GM12878 (cell line): ENCODE measurements at regions of chr20 and their contacts with region 1.

Region 1: DNA sequence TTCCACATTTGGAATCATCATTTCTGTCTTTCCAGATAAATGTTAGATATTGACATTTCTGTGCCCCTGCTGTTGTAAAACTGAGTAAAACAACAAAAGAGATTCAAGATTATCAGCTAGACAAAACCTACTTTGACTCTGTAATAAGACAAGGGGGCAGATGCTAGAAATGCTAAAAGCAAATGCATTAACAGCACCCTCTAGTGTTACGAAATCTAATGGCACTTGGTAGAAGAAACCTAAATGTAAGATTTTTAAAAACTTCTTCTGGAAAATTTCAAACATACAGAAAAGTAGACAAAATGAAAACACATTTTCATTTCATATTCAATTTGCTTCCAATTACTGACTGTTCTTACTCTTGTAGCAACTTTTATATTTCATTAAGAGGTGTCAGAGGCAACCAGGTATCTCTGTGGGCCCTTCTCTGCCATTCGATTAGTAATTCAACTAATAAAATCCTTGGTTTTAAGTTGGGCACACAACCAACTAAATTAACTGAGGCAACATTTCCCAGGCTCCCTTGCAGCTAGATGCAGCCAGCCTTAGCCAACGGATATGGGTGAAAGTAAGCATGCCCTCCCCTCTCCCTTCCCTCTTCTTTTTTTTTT is 45.0 kb downstream of the SLC23A2 start:
- DNase-seq: no peak
- ATAC-seq: peak; percentile 75
- H3K4me3 ChIP-seq: no peak overlapping the region
- H3K27ac ChIP-seq: no peak overlapping the region
- H3K4me1 ChIP-seq: peaks cover 9% of the 10 kb centered on the region
- H3K27me3 ChIP-seq: no peaks in the 10 kb centered on the region
- CTCF ChIP-seq: peak; percentile 66 to 84 (median 82)
- EP300 ChIP-seq: no peak
- POLR2A ChIP-seq: no peak
- RAD21 ChIP-seq: peak; percentile 88

Region 2: GRCh38 chr20:4813863-4814695 is 142.2 kb before region 1 on chr20:
- CTCF ChIA-PET with region 1: interaction called, 11 read pairs
- POLR2A ChIA-PET with region 1: interaction called, 3 read pairs
- RAD21 ChIA-PET with region 1: interaction called, 13 read pairs
- SMC1A ChIA-PET with region 1: interaction called, 19 read pairs
- in situ Hi-C with region 1: no loop called
- intact Hi-C with region 1: no loop called
- DNase-seq: peak; percentile 91
- ATAC-seq: peak; percentile 63
- H3K4me3 ChIP-seq: peak overlapping the region; percentile 71
- H3K27ac ChIP-seq: peak overlapping the region; percentile 98
- H3K4me1 ChIP-seq: peaks cover 66% of the 10 kb centered on the region
- H3K27me3 ChIP-seq: no peaks in the 10 kb centered on the region
- CTCF ChIP-seq: peak in 2 of 3 experiments; percentile 1 to 10; a peak in 1 of 6 replicates
- EP300 ChIP-seq: peak in 1 of 2 experiments; percentile 62; a peak in 2 of 4 replicates
- POLR2A ChIP-seq: no peak; the same call in 1 of the 2 replicates
- RAD21 ChIP-seq: no peak

Region 3: DNA sequence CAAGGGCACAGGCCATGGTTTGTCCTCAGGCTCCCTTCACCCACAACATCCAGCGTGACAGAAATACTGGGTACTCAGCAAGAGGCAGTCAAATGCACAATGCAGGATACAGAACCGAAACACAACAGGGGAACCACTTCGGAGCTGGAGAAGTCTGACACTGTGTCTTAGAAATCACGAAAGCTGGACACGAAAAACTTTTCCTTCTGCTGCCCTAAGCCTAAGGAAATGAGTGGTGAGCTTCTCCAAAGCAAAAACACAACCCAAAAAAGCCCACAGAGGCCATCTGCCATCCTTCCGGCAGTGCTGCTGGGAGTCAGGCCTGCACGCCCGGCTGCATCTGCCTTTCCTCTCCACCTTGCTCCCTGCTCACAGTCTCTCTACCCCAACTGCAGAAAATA is 61.3 kb before region 1 on chr20:
- CTCF ChIA-PET with region 1: no interaction called
- POLR2A ChIA-PET with region 1: no interaction called
- RAD21 ChIA-PET with region 1: no interaction called
- SMC1A ChIA-PET with region 1: no interaction called
- in situ Hi-C with region 1: no loop called
- intact Hi-C with region 1: no loop called
- DNase-seq: no peak
- ATAC-seq: no peak
- H3K4me3 ChIP-seq: no peak overlapping the region
- H3K27ac ChIP-seq: no peak overlapping the region
- H3K4me1 ChIP-seq: peaks cover 10% of the 10 kb centered on the region
- H3K27me3 ChIP-seq: no peaks in the 10 kb centered on the region
- CTCF ChIP-seq: no peak
- EP300 ChIP-seq: no peak
- POLR2A ChIP-seq: no peak
- RAD21 ChIP-seq: no peak

Region 4: DNA sequence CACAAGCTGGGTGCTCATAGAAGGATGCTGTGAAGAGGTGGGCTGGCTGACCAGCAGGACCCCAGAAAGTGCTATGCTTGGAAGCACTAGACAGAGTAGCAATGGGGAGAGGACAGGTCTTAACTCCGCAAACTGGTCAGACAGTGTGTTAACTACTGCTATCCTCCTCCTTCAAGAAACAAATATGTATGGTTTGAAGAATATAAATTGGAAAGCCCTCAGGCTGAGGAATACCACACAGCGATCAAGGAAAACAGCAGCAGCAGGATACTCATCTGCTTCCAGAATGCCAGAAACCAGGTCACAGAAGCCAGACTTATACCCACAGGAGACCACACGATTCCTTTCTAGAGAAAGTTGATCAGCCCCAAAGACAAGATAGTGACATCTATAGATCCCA is 49.4 kb before region 1 on chr20:
- CTCF ChIA-PET with region 1: interaction called, 12 read pairs
- POLR2A ChIA-PET with region 1: no interaction called
- RAD21 ChIA-PET with region 1: no interaction called
- SMC1A ChIA-PET with region 1: interaction called, 3 read pairs
- in situ Hi-C with region 1: no loop called
- intact Hi-C with region 1: no loop called
- DNase-seq: no peak
- ATAC-seq: no peak
- H3K4me3 ChIP-seq: no peak overlapping the region
- H3K27ac ChIP-seq: no peak overlapping the region
- H3K4me1 ChIP-seq: no peaks in the 10 kb centered on the region
- H3K27me3 ChIP-seq: no peaks in the 10 kb centered on the region
- CTCF ChIP-seq: no peak
- EP300 ChIP-seq: no peak
- POLR2A ChIP-seq: no peak
- RAD21 ChIP-seq: no peak

Region 5: DNA sequence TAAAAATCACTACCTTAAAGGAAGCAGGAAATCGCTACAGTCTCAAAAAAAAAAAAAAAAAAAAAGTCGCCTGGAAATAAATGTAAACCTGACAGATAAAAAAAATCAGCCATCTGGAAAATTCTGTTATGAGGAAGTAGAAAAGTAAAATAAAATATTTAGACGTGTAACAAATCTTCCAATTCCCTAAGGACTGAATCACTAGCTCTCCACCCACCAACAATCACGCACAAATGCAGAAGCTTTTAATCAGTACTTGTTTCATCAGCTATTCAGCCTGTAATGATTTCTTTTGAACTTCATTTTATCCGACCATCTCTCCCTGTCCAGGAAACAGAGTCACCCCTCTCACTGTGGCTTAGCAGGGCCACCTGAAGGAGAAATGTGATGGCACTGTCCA is 14.0 kb before region 1 on chr20:
- CTCF ChIA-PET with region 1: interaction called, 18 read pairs
- POLR2A ChIA-PET with region 1: interaction called, 3 read pairs
- RAD21 ChIA-PET with region 1: interaction called, 8 read pairs
- SMC1A ChIA-PET with region 1: interaction called, 14 read pairs
- in situ Hi-C with region 1: no loop called
- intact Hi-C with region 1: no loop called
- DNase-seq: no peak
- ATAC-seq: no peak
- H3K4me3 ChIP-seq: no peak overlapping the region
- H3K27ac ChIP-seq: no peak overlapping the region
- H3K4me1 ChIP-seq: peaks cover 18% of the 10 kb centered on the region
- H3K27me3 ChIP-seq: no peaks in the 10 kb centered on the region
- CTCF ChIP-seq: no peak
- EP300 ChIP-seq: no peak
- POLR2A ChIP-seq: no peak
- RAD21 ChIP-seq: no peak

Region 6: DNA sequence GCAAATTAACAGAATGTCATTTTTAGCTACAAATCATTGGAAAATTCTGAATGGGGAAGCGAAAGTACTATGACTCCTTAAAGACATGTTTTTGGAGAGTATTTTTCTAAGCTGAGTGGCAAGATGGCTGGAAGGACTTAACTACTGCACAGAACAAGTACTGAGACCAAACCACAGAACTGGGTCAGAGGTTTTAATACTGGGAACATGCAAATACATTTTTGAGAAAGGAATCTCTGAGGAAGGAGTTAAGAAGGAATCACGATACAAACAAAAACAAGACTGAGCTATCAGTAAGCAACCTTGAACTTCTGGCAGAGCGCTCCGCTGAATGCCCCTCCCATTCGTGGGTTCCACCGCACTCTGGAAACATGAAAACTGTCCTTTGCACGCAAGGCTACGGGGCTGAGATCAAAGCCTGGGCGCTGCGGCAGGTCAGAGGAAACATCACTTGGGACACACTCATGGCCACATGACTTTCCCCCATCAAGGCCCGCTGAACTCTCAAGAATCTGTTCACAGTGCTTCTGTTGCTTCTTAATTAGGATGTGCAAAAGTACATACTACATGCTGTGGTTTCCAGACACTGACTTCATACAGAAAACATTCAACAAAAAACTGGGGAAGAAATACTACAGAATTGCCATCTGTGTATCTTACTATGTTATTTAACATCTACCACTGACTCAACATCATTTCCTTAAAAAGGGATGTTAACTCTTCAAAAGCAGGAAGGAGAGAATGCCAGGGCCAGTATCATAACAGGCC is 17.2 kb after region 1 on chr20:
- CTCF ChIA-PET with region 1: interaction called, 26 read pairs
- POLR2A ChIA-PET with region 1: interaction called, 9 read pairs
- RAD21 ChIA-PET with region 1: interaction called, 6 read pairs
- SMC1A ChIA-PET with region 1: interaction called, 11 read pairs
- in situ Hi-C with region 1: no loop called
- intact Hi-C with region 1: no loop called
- DNase-seq: peak; percentile 85
- ATAC-seq: peak; percentile 94
- H3K4me3 ChIP-seq: peak overlapping the region; percentile 42
- H3K27ac ChIP-seq: peak overlapping the region; percentile 76
- H3K4me1 ChIP-seq: peaks cover 4% of the 10 kb centered on the region
- H3K27me3 ChIP-seq: no peaks in the 10 kb centered on the region
- CTCF ChIP-seq: no peak
- EP300 ChIP-seq: peak; percentile 94 to 97
- POLR2A ChIP-seq: peak; percentile 45; the same call in 1 of the 2 replicates
- RAD21 ChIP-seq: 0 out of 2 replicates have a peak, but pooled peaks have one; percentile 12

Region 7: DNA sequence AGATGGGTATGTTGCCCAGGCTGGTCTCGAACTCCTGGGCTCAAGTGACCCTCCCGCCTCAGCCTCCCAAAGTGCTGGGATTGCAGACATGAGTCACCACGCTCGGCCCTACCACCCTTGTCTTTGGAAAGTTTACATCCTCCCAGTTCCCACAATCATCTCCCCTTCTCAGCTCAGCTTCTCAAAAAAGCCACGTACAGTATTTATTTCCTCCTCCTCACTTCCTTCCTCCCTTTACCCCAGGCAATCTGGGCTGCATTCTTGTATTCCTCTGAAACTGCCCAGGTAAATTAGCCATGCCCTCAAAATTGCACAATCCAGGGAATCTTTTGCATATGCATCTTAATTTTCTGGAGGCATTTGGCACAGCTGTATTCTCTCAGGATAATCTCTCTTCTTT is 52.5 kb after region 1 on chr20:
- CTCF ChIA-PET with region 1: no interaction called
- POLR2A ChIA-PET with region 1: no interaction called
- RAD21 ChIA-PET with region 1: no interaction called
- SMC1A ChIA-PET with region 1: no interaction called
- in situ Hi-C with region 1: no loop called
- intact Hi-C with region 1: no loop called
- DNase-seq: no peak
- ATAC-seq: no peak
- H3K4me3 ChIP-seq: no peak overlapping the region
- H3K27ac ChIP-seq: no peak overlapping the region
- H3K4me1 ChIP-seq: no peaks in the 10 kb centered on the region
- H3K27me3 ChIP-seq: 0 out of 4 replicates have a peak, but pooled peaks cover 0 to 3% of the 10 kb centered on the region in 2 experiments
- CTCF ChIP-seq: no peak
- EP300 ChIP-seq: no peak
- POLR2A ChIP-seq: no peak
- RAD21 ChIP-seq: no peak